CD8-positive, alpha-beta memory T cell (primary cell): ENCODE measurements at regions of chr18 and their contacts with region 1.

Region 1: GRCh38 chr18:77000527-77000926 is 132.1 kb downstream of the MBP start:
- DNase-seq: peak in 4 of 5 donors; percentile 30 to 44 (median 42)
- H3K4me3 ChIP-seq: no peak overlapping the region
- H3K4me3 Mint-ChIP-seq: no peak overlapping the region
- H3K27ac ChIP-seq: no peak overlapping the region
- H3K27ac Mint-ChIP-seq: peak overlapping the region in 2 of 8 donors; percentile 26 to 30
- H3K4me1 ChIP-seq: peaks cover 9% of the 10 kb centered on the region
- H3K4me1 Mint-ChIP-seq: peaks cover 28 to 45% (median 34%) of the 10 kb centered on the region in 3 donors
- H3K27me3 ChIP-seq: no peaks in the 10 kb centered on the region
- H3K27me3 Mint-ChIP-seq: peaks cover 0 to 2% of the 10 kb centered on the region in 2 donors

Region 2: GRCh38 chr18:76982841-76983587 is 17.5 kb before region 1 on chr18:
- CTCF ChIA-PET with region 1: interaction called, 32 read pairs
- POLR2A ChIA-PET with region 1: no interaction called
- DNase-seq: peak; percentile 70 to 87 (median 74)
- H3K4me3 ChIP-seq: no peak overlapping the region
- H3K4me3 Mint-ChIP-seq: peak overlapping the region in 2 of 7 donors; percentile 23 to 28
- H3K27ac ChIP-seq: no peak overlapping the region
- H3K27ac Mint-ChIP-seq: peak overlapping the region in 2 of 8 donors; percentile 42 to 74
- H3K4me1 ChIP-seq: no peaks in the 10 kb centered on the region
- H3K4me1 Mint-ChIP-seq: peaks cover 6 to 8% (median 8%) of the 10 kb centered on the region in 3 donors
- H3K27me3 ChIP-seq: no peaks in the 10 kb centered on the region
- H3K27me3 Mint-ChIP-seq: peaks cover 0 to 2% of the 10 kb centered on the region in 2 donors

Region 3: GRCh38 chr18:77013811-77014521 is 13.4 kb after region 1 on chr18:
- CTCF ChIA-PET with region 1: interaction called, 31 read pairs
- POLR2A ChIA-PET with region 1: no interaction called
- DNase-seq: no peak
- H3K4me3 ChIP-seq: no peak overlapping the region
- H3K4me3 Mint-ChIP-seq: no peak overlapping the region
- H3K27ac ChIP-seq: no peak overlapping the region
- H3K27ac Mint-ChIP-seq: peak overlapping the region in 4 of 8 donors; percentile 30 to 78 (median 54)
- H3K4me1 ChIP-seq: no peaks in the 10 kb centered on the region
- H3K4me1 Mint-ChIP-seq: peaks cover 58 to 76% (median 64%) of the 10 kb centered on the region in 3 donors
- H3K27me3 ChIP-seq: no peaks in the 10 kb centered on the region
- H3K27me3 Mint-ChIP-seq: no peaks in the 10 kb centered on the region

Region 4: DNA sequence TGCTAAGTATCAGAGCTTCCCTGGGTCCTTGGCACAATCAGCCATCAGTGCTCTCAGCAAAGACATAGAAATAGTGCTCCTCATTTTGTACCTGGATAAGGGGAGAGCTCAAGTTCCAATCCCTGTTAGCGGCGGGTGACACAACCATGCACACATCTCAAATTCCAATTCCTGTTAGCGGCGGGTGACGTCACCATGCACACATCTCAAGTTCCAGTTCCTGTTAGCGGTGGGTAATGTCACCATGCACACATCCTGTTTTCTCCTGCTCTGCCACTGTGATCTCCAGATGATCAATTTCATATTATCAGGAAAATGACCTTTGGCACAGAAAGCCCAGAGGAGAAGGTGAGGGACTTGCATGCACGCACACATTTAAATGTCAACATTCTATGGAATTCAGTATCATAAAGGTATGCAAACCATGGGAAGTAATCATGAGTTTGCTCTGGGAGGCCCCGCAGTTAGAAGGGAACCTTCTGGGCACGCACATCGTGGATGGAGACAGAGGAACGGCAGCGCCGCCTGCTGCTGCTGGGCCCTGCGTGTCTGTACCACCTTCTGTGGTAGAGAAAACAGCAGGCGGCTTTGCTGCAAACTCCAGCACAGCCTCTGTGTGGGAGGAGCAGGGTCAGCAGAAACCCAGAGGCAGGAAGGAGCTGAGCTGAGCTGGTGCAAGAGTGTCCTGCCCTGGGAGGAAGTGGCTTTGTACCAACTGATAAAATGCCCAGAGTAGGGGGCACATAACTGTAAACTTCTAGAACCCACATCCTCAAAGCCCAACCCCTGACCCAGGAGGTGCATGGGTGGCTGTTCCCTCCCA is 54.3 kb after region 1 on chr18:
- CTCF ChIA-PET with region 1: interaction called, 31 read pairs
- POLR2A ChIA-PET with region 1: interaction called, 8 read pairs
- DNase-seq: peak; percentile 63 to 87 (median 80)
- H3K4me3 ChIP-seq: peak overlapping the region; percentile 50
- H3K4me3 Mint-ChIP-seq: peak overlapping the region; percentile 70 to 89 (median 82)
- H3K27ac ChIP-seq: peak overlapping the region; percentile 71
- H3K27ac Mint-ChIP-seq: peak overlapping the region; percentile 83 to 98 (median 94)
- H3K4me1 ChIP-seq: peaks cover 77% of the 10 kb centered on the region
- H3K4me1 Mint-ChIP-seq: peaks cover 66 to 79% (median 71%) of the 10 kb centered on the region in 3 donors
- H3K27me3 ChIP-seq: no peaks in the 10 kb centered on the region
- H3K27me3 Mint-ChIP-seq: no peaks in the 10 kb centered on the region

Region 5: GRCh38 chr18:77061946-77062517 is 61.5 kb after region 1 on chr18:
- CTCF ChIA-PET with region 1: interaction called, 14 read pairs
- POLR2A ChIA-PET with region 1: no interaction called
- DNase-seq: no peak
- H3K4me3 ChIP-seq: peak overlapping the region; percentile 41
- H3K4me3 Mint-ChIP-seq: peak overlapping the region; percentile 43 to 86 (median 81)
- H3K27ac ChIP-seq: peak overlapping the region; percentile 73
- H3K27ac Mint-ChIP-seq: peak overlapping the region; percentile 93 to 99 (median 98)
- H3K4me1 ChIP-seq: peaks cover 89% of the 10 kb centered on the region
- H3K4me1 Mint-ChIP-seq: peaks cover 85 to 89% (median 89%) of the 10 kb centered on the region in 3 donors
- H3K27me3 ChIP-seq: no peaks in the 10 kb centered on the region
- H3K27me3 Mint-ChIP-seq: no peaks in the 10 kb centered on the region

Region 6: GRCh38 chr18:77132371-77133050 is 132.0 kb after region 1 on chr18 and contains the start of gene MBP:
- CTCF ChIA-PET with region 1: interaction called, 19 read pairs
- POLR2A ChIA-PET with region 1: no interaction called
- DNase-seq: peak; percentile 59 to 77 (median 66)
- H3K4me3 ChIP-seq: peak within 1 kb of the TSS; percentile 75
- H3K4me3 Mint-ChIP-seq: peak within 1 kb of the TSS; percentile 97 to 100 (median 98)
- H3K27ac ChIP-seq: peak within 1 kb of the TSS; percentile 71
- H3K27ac Mint-ChIP-seq: peak within 1 kb of the TSS; percentile 82 to 98 (median 96)
- H3K4me1 ChIP-seq: peaks cover 44% of the 10 kb centered on the region
- H3K4me1 Mint-ChIP-seq: peaks cover 49 to 53% (median 50%) of the 10 kb centered on the region in 3 donors
- H3K27me3 ChIP-seq: no peaks in the 10 kb centered on the region
- H3K27me3 Mint-ChIP-seq: no peaks in the 10 kb centered on the region
- total RNA-seq, gene MBP: 59.5 to 60.0 TPM

Region 7: DNA sequence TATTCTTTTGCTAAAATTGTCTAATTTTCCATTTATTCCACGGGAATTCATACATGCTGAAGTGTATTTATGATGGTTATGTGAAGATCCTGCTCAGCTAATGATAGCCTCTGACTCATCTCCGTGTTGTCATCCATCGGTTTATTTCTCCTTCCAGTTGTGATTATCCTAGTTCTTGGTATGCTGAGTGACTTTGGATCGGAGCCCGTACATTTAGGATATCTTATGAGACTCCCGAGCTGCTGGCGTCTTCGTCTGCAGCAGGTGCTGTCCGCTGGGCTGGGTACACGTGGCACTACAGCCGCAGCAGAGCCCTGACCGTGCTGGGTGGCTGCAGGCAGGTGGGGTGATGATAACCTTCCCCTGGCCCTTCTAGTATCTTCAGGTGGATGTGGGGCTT is 209.1 kb after region 1 on chr18:
- CTCF ChIA-PET with region 1: interaction called, 42 read pairs
- POLR2A ChIA-PET with region 1: interaction called, 6 read pairs
- DNase-seq: no peak
- H3K4me3 ChIP-seq: peak overlapping the region; percentile 56
- H3K4me3 Mint-ChIP-seq: peak overlapping the region; percentile 86 to 94 (median 92)
- H3K27ac ChIP-seq: no peak overlapping the region
- H3K27ac Mint-ChIP-seq: peak overlapping the region; percentile 89 to 97 (median 93)
- H3K4me1 ChIP-seq: peaks cover 38% of the 10 kb centered on the region
- H3K4me1 Mint-ChIP-seq: peaks cover 41 to 49% (median 47%) of the 10 kb centered on the region in 3 donors
- H3K27me3 ChIP-seq: no peaks in the 10 kb centered on the region
- H3K27me3 Mint-ChIP-seq: no peaks in the 10 kb centered on the region

Region 8: DNA sequence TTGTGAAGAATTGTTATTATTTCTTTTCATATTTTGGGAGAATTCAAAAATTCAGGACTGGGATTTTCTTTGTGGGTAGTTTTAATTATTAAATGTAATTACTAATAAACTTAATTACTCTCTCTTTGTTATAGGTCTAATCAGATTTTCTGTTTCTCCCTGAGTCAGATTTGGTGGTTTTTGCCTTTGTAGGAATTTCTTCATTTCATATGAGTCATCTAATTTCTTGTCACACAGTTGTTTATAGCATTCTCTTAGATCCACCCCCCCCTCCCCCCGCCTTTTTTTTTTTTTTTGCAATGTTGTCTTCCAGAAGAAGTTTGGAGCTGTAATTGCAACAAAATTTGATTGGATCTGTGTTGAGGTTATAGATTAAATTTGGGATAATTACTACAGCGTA is 223.1 kb after region 1 on chr18:
- CTCF ChIA-PET with region 1: no interaction called
- POLR2A ChIA-PET with region 1: no interaction called
- DNase-seq: no peak
- H3K4me3 ChIP-seq: no peak overlapping the region
- H3K4me3 Mint-ChIP-seq: no peak overlapping the region
- H3K27ac ChIP-seq: no peak overlapping the region
- H3K27ac Mint-ChIP-seq: no peak overlapping the region
- H3K4me1 ChIP-seq: no peaks in the 10 kb centered on the region
- H3K4me1 Mint-ChIP-seq: peaks cover 15 to 20% (median 16%) of the 10 kb centered on the region in 3 donors
- H3K27me3 ChIP-seq: no peaks in the 10 kb centered on the region
- H3K27me3 Mint-ChIP-seq: peaks cover 3 to 11% of the 10 kb centered on the region in 2 donors